PC-9 (cell line): ENCODE measurements at regions of chr2 and their contacts with region 1.

Region 1: GRCh38 chr2:102487761-102488466 is 14.9 kb downstream of the SLC9A4 start:
- DNase-seq: peak; percentile 87 to 99
- H3K4me3 ChIP-seq: peak overlapping the region; percentile 3; the same call in 1 of the 2 replicates
- H3K27ac ChIP-seq: peak overlapping the region; percentile 91
- H3K4me1 ChIP-seq: peaks cover 38% of the 10 kb centered on the region
- H3K27me3 ChIP-seq: no peaks in the 10 kb centered on the region
- CTCF ChIP-seq: no peak

Region 2: GRCh38 chr2:102473020-102473419 is 14.9 kb before region 1 on chr2 and contains the start of gene SLC9A4:
- CTCF ChIA-PET with region 1: interaction called, 5 read pairs
- POLR2A ChIA-PET with region 1: no interaction called
- intact Hi-C with region 1: loop called (anchors 1 kb)
- DNase-seq: peak; percentile 61 to 69
- H3K4me3 ChIP-seq: no peak within 1 kb of the TSS
- H3K27ac ChIP-seq: no peak within 1 kb of the TSS
- H3K4me1 ChIP-seq: peaks cover 9% of the 10 kb centered on the region; the same call in 1 of the 2 replicates
- H3K27me3 ChIP-seq: no peaks in the 10 kb centered on the region
- CTCF ChIP-seq: peak; percentile 97
- total RNA-seq, gene SLC9A4: 0.85 and 1.1 TPM in 2 replicates

Region 3: GRCh38 chr2:102505290-102505689 is 17.4 kb after region 1 on chr2:
- CTCF ChIA-PET with region 1: no interaction called
- POLR2A ChIA-PET with region 1: no interaction called
- intact Hi-C with region 1: loop called (anchors 1 kb)
- DNase-seq: peak; percentile 63 to 87
- H3K4me3 ChIP-seq: peak overlapping the region; percentile 47
- H3K27ac ChIP-seq: no peak overlapping the region
- H3K4me1 ChIP-seq: peaks cover 18% of the 10 kb centered on the region
- H3K27me3 ChIP-seq: no peaks in the 10 kb centered on the region
- CTCF ChIP-seq: no peak

Region 4: DNA sequence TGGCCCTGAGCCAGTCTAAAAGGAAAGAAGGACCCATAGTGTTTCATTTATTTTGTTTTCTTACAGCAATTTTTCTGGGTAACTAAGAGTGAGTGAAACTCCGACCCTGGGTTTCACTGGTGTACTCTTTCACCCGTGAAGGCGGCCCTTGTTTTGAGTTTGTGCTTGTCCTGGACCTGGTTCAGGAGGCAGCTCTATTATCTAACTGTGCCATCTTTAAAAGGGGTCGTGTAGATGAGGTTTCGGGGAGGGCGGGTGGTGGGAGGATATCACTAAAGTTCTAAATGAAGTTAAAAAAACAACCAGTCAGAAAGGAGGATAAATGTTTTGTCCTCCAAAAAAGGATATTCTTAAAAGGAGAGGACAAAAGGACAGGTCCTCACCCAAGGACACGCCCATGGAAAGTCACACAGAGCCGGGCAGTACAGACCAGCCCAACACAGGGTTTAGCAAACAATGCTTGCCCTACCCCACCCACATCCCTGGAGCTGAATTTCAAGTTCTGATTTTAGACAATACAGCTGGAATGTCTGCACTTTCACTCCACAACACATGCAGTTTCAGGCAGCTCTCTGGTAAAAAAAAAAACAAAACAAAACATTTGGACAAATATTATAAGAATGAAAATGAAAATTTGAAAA is 52.8 kb after region 1 on chr2:
- CTCF ChIA-PET with region 1: no interaction called
- POLR2A ChIA-PET with region 1: no interaction called
- intact Hi-C with region 1: loop called (anchors 2 kb)
- DNase-seq: peak; percentile 74 to 77
- H3K4me3 ChIP-seq: no peak overlapping the region
- H3K27ac ChIP-seq: peak overlapping the region; percentile 71
- H3K4me1 ChIP-seq: peaks cover 16% of the 10 kb centered on the region
- H3K27me3 ChIP-seq: no peaks in the 10 kb centered on the region
- CTCF ChIP-seq: no peak

Region 5: GRCh38 chr2:102558463-102558862 is 70.5 kb after region 1 on chr2:
- CTCF ChIA-PET with region 1: no interaction called
- POLR2A ChIA-PET with region 1: no interaction called
- intact Hi-C with region 1: no loop called
- DNase-seq: no peak
- H3K4me3 ChIP-seq: no peak overlapping the region
- H3K27ac ChIP-seq: no peak overlapping the region
- H3K4me1 ChIP-seq: no peaks in the 10 kb centered on the region
- H3K27me3 ChIP-seq: no peaks in the 10 kb centered on the region
- CTCF ChIP-seq: no peak

Region 6: DNA sequence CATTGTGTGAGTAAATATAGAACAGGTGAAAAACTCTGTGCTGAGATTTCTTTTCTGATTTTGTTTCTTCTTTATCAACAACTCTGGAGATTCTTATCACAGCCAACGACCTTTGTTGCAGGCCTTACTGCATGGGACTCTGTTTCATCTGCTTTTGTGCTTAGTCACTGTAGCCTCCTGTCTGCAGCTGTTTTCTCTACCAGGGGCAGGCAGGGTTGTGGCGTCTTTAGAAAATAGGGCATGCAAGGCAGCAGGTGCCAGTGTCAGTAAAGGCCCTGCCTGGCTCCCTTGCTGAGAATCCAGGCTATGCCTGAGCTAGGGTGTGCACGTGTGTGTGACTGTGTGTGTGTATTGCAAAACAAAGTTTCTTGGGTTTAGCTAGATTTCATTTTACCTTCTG is 116.8 kb after region 1 on chr2:
- CTCF ChIA-PET with region 1: no interaction called
- POLR2A ChIA-PET with region 1: no interaction called
- intact Hi-C with region 1: loop called (anchors 1 kb)
- DNase-seq: peak in 1 of 2 experiments; percentile 43
- H3K4me3 ChIP-seq: no peak overlapping the region
- H3K27ac ChIP-seq: peak overlapping the region; percentile 48
- H3K4me1 ChIP-seq: peaks cover 30% of the 10 kb centered on the region
- H3K27me3 ChIP-seq: no peaks in the 10 kb centered on the region
- CTCF ChIP-seq: no peak